ENCODE measurements at regions of chr11 and their contacts with region 1.

Region 1: GRCh38 chr11:102396708-102397563 is 49.9 kb downstream of the BIRC2 start:
- DNase-seq: no peak
- ATAC-seq: peak; percentile 63
- H3K4me3 Mint-ChIP-seq: no peak overlapping the region
- H3K27ac Mint-ChIP-seq: peak overlapping the region; percentile 79
- H3K4me1 Mint-ChIP-seq: peaks cover 44% of the 10 kb centered on the region
- H3K27me3 Mint-ChIP-seq: no peaks in the 10 kb centered on the region
- CTCF ChIP-seq: no peak

Region 2: DNA sequence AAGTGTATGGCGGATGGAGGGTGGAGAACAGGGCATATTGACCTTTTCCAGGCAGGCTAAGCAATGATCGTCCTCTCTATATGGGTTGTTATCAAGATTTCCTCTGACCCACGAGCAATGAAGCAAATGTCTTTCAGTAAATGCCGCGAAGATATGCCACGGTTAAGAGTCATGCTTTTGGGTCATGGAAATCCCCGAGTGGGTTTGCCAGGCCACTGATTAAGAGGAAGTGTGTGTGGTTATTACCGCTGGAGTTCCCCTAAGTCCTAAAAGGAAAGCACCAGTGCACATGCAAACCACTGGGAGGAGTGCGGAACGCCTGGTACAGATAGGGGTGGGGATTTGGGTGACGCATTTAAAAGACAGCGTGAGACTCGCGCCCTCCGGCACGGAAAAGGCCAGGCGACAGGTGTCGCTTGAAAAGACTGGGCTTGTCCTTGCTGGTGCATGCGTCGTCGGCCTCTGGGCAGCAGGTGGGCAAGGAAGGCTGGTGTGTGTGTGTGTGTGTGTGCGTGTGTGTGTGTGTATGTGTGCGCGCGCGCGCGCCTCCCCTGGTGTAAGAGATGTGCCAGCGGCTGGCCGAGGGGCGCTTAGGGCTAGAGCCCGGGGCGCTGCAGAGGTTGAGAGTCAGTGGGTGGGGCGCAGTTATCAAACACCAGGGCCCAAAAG is 79.7 kb before region 1 on chr11 and contains the start of gene BIRC3:
- CTCF ChIA-PET with region 1: no interaction called
- POLR2A ChIA-PET with region 1: no interaction called
- intact Hi-C with region 1: no loop called
- DNase-seq: peak; percentile 98
- ATAC-seq: peak; percentile 87
- H3K4me3 Mint-ChIP-seq: peak within 1 kb of the TSS; percentile 100
- H3K27ac Mint-ChIP-seq: peak within 1 kb of the TSS; percentile 99
- H3K4me1 Mint-ChIP-seq: peaks cover 62% of the 10 kb centered on the region
- H3K27me3 Mint-ChIP-seq: no peaks in the 10 kb centered on the region
- CTCF ChIP-seq: no peak
- total RNA-seq, gene BIRC3: 102 to 108 TPM

Region 3: DNA sequence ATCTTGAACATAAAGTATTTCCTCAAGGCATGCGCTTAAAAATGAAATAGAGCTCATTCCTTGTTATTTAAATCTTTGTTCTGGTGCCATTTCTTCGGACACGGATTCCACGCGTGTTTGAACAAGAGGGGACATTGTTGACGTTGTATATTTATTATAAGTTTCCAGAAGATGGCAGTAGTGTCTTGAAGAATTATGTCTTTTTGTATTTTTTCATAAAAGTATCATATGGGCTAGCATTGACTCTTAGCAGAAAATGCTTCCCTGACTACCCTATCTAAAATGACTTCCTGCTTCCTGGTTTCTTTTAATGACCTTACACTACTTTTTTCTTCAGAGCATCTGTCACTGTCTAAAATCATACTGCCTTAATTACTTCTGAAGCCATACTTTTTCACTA is 29.6 kb before region 1 on chr11:
- CTCF ChIA-PET with region 1: interaction called, 11 read pairs
- POLR2A ChIA-PET with region 1: no interaction called
- intact Hi-C with region 1: no loop called
- DNase-seq: no peak
- ATAC-seq: peak; percentile 64
- H3K4me3 Mint-ChIP-seq: no peak overlapping the region
- H3K27ac Mint-ChIP-seq: peak overlapping the region; percentile 34
- H3K4me1 Mint-ChIP-seq: peaks cover 30% of the 10 kb centered on the region
- H3K27me3 Mint-ChIP-seq: no peaks in the 10 kb centered on the region
- CTCF ChIP-seq: peak; percentile 56

Region 4: GRCh38 chr11:102415304-102415916 is 18.5 kb after region 1 on chr11:
- CTCF ChIA-PET with region 1: interaction called, 11 read pairs
- POLR2A ChIA-PET with region 1: interaction called, 3 read pairs
- intact Hi-C with region 1: no loop called
- DNase-seq: no peak
- ATAC-seq: peak; percentile 68
- H3K4me3 Mint-ChIP-seq: peak overlapping the region; percentile 48
- H3K27ac Mint-ChIP-seq: peak overlapping the region; percentile 87
- H3K4me1 Mint-ChIP-seq: peaks cover 96% of the 10 kb centered on the region
- H3K27me3 Mint-ChIP-seq: no peaks in the 10 kb centered on the region
- CTCF ChIP-seq: no peak

Region 5: GRCh38 chr11:102451681-102452460 is 54.9 kb after region 1 on chr11:
- CTCF ChIA-PET with region 1: interaction called, 8 read pairs
- POLR2A ChIA-PET with region 1: interaction called, 8 read pairs
- intact Hi-C with region 1: loop called (anchors 1 kb)
- DNase-seq: peak; percentile 88
- ATAC-seq: peak; percentile 64
- H3K4me3 Mint-ChIP-seq: peak overlapping the region; percentile 98
- H3K27ac Mint-ChIP-seq: peak overlapping the region; percentile 96
- H3K4me1 Mint-ChIP-seq: peaks cover 75% of the 10 kb centered on the region
- H3K27me3 Mint-ChIP-seq: no peaks in the 10 kb centered on the region
- CTCF ChIP-seq: peak; percentile 27

Region 6: DNA sequence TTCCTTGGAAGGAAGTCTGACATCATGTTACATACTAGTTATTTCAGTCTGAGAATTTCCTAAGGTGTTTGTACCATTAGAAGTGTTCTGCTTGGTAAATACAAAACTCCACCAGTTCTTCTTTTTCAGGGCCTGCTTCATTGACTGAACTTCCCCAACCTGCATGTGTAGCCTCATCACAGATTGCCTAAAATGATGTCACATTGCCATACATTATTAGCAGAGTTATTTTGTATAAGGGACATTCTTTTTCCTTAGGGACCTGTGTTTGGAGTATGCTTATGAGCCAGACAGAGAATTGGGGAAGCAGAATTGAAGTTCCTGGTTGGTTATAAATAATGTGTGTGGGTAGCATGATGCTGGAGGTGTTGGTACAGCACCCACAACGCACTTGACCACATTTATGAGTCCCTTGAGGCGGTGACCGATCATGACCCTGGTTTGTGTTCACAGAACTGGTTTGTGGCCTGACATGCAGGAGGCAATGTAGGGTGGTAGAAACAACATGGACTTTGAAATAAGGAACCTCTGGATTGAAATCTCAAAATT is 150.1 kb after region 1 on chr11:
- CTCF ChIA-PET with region 1: no interaction called
- POLR2A ChIA-PET with region 1: no interaction called
- intact Hi-C with region 1: no loop called
- DNase-seq: peak; percentile 24
- ATAC-seq: peak; percentile 20
- H3K4me3 Mint-ChIP-seq: no peak overlapping the region
- H3K27ac Mint-ChIP-seq: no peak overlapping the region
- H3K4me1 Mint-ChIP-seq: peaks cover 2% of the 10 kb centered on the region
- H3K27me3 Mint-ChIP-seq: no peaks in the 10 kb centered on the region
- CTCF ChIP-seq: no peak